Breast epithelium (tissue), 4 donors: ENCODE measurements at regions of chr3 and their contacts with region 1.

Region 1: GRCh38 chr3:56314842-56315241 is 153.4 kb downstream of the ERC2 start:
- DNase-seq: peak; percentile 52 to 87
- H3K4me3 ChIP-seq: no peak overlapping the region
- H3K27ac ChIP-seq: peak overlapping the region; percentile 18 to 36
- H3K4me1 ChIP-seq: no peaks in the 10 kb centered on the region
- H3K27me3 ChIP-seq: no peaks in the 10 kb centered on the region
- CTCF ChIP-seq: no peak
- POLR2A ChIP-seq: no peak

Region 2: DNA sequence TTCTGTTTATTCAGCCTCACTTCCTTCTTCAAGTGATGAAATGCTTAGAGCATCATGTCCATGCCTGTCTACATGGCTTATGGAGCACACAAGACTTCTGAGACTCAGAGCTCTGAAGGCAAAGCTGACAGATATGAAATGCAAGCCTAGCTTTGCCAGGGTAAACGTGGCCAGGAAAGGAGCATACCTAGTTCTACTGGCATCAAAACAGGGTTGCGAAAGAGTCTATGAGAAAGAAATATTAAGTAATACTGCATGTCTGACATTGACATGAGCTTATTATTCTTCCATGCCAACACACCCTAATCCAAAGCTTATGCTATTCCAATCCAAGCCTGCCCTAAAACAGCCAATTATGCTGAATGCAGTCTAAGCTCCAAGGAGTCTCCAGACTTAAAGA is 238.1 kb before region 1 on chr3:
- intact Hi-C with region 1: no loop called
- DNase-seq: no peak
- H3K4me3 ChIP-seq: no peak overlapping the region
- H3K27ac ChIP-seq: no peak overlapping the region
- H3K4me1 ChIP-seq: no peaks in the 10 kb centered on the region
- H3K27me3 ChIP-seq: no peaks in the 10 kb centered on the region
- CTCF ChIP-seq: no peak
- POLR2A ChIP-seq: no peak

Region 3: GRCh38 chr3:56369914-56370313 is 55.1 kb after region 1 on chr3:
- intact Hi-C with region 1: loop called (anchors 2 kb)
- DNase-seq: no peak
- H3K4me3 ChIP-seq: no peak overlapping the region
- H3K27ac ChIP-seq: no peak overlapping the region
- H3K4me1 ChIP-seq: no peaks in the 10 kb centered on the region
- H3K27me3 ChIP-seq: no peaks in the 10 kb centered on the region
- CTCF ChIP-seq: no peak
- POLR2A ChIP-seq: no peak

Region 4: DNA sequence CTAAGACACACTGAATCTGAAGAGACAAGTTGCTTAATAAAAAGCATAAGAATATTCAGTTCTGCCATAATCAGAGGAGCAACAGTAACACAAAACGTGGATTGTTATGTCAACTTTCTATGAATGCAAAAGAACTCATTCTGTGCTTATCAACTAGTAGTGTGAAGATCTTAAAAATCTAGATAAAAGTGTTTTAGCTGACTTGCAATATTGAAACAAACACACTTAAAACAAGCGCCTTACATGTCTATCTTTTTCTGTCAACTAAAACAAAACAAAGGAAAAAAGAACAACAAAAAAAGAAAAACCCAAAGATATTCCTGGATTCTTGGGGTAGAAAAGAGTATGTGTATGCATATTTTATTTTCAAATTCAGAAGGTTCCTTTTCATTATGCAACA is 330.6 kb after region 1 on chr3:
- intact Hi-C with region 1: loop called (anchors 5 kb)
- DNase-seq: no peak
- H3K4me3 ChIP-seq: no peak overlapping the region
- H3K27ac ChIP-seq: no peak overlapping the region
- H3K4me1 ChIP-seq: no peaks in the 10 kb centered on the region
- H3K27me3 ChIP-seq: no peaks in the 10 kb centered on the region
- CTCF ChIP-seq: no peak
- POLR2A ChIP-seq: no peak